ENCODE measurements at regions of chr1 and their contacts with region 1.

Region 1: GRCh38 chr1:231240883-231241735 is at the start of gene GNPAT:
- DNase-seq: peak; percentile 91
- H3K4me3 Mint-ChIP-seq: peak within 1 kb of the TSS; percentile 99
- H3K27ac Mint-ChIP-seq: peak within 1 kb of the TSS; percentile 95
- H3K4me1 Mint-ChIP-seq: peaks cover 51% of the 10 kb centered on the region
- H3K27me3 Mint-ChIP-seq: no peaks in the 10 kb centered on the region
- total RNA-seq, gene GNPAT: 41.7 and 43.1 TPM in 2 replicates

Region 2: DNA sequence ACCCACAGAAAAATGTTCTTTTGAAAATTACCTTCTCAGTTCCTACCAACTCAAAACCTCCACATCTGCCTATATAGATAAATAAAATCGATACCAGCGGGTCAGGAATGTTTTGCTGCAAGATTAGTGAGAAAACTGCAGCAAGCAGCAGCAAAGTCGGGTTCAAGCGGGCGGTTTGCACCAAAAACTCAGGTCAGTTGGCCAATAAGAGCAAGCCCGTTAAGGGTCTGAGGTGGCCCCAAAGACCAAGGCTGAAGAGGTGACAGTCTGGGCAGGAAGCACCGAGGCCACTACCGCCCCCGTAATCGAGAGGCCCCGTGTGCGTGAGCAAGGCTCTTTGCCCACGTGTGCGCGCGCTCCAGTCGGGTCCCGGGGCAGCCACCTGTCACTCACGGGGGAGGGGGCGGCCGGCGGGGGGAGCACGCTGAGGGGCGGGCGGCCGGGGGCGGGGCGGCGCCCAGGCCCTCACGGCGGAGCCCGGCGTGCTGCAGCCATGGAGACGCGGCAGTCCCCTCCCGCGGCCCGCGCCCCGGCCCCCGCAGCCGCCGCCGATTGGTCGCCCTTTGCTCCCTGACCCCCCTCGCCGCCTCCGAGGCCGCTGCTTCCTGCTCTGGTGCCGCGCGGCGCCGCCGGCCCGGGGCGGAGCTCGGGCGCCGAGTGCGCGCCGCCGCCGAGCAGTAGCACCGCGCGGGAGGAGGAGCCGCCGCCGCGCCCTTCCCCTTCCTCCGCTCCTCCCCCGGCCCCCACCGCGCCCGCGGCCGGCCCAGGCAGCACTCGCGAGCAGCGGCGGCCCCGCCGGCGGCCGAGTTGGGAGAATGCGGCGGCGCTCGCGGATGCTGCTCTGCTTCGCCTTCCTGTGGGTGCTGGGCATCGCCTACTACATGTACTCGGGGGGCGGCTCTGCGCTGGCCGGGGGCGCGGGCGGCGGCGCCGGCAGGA is 1174.4 kb before region 1 on chr1 and contains the start of gene GALNT2:
- intact Hi-C with region 1: loop called (anchors 10 kb)
- DNase-seq: peak; percentile 88
- H3K4me3 Mint-ChIP-seq: peak within 1 kb of the TSS; percentile 93
- H3K27ac Mint-ChIP-seq: peak within 1 kb of the TSS; percentile 89
- H3K4me1 Mint-ChIP-seq: peaks cover 48% of the 10 kb centered on the region
- H3K27me3 Mint-ChIP-seq: peaks cover 3% of the 10 kb centered on the region
- total RNA-seq, gene GALNT2: 67.6 and 67.9 TPM in 2 replicates

Region 3: GRCh38 chr1:230978491-230979388 is 262.4 kb before region 1 on chr1 and contains the starts of genes ARV1 and TTC13:
- intact Hi-C with region 1: loop called (anchors 1 kb)
- DNase-seq: peak; percentile 97
- H3K4me3 Mint-ChIP-seq: peak within 1 kb of the TSS; percentile 92
- H3K27ac Mint-ChIP-seq: peak within 1 kb of the TSS; percentile 94
- H3K4me1 Mint-ChIP-seq: peaks cover 33% of the 10 kb centered on the region
- H3K27me3 Mint-ChIP-seq: no peaks in the 10 kb centered on the region
- total RNA-seq, gene ARV1: 14.3 and 14.6 TPM in 2 replicates
- total RNA-seq, gene TTC13: 20.7 and 21.8 TPM in 2 replicates

Region 4: GRCh38 chr1:231272880-231273279 is 31.8 kb after region 1 on chr1:
- intact Hi-C with region 1: loop called (anchors 1 kb)
- DNase-seq: peak; percentile 27
- H3K4me3 Mint-ChIP-seq: peak overlapping the region; percentile 83
- H3K27ac Mint-ChIP-seq: peak overlapping the region; percentile 100
- H3K4me1 Mint-ChIP-seq: peaks cover 39% of the 10 kb centered on the region
- H3K27me3 Mint-ChIP-seq: no peaks in the 10 kb centered on the region

Region 5: GRCh38 chr1:231416901-231417300 is 175.8 kb after region 1 on chr1:
- intact Hi-C with region 1: loop called (anchors 2 kb)
- DNase-seq: no peak
- H3K4me3 Mint-ChIP-seq: peak overlapping the region; percentile 93
- H3K27ac Mint-ChIP-seq: no peak overlapping the region
- H3K4me1 Mint-ChIP-seq: peaks cover 74% of the 10 kb centered on the region
- H3K27me3 Mint-ChIP-seq: no peaks in the 10 kb centered on the region

Region 6: DNA sequence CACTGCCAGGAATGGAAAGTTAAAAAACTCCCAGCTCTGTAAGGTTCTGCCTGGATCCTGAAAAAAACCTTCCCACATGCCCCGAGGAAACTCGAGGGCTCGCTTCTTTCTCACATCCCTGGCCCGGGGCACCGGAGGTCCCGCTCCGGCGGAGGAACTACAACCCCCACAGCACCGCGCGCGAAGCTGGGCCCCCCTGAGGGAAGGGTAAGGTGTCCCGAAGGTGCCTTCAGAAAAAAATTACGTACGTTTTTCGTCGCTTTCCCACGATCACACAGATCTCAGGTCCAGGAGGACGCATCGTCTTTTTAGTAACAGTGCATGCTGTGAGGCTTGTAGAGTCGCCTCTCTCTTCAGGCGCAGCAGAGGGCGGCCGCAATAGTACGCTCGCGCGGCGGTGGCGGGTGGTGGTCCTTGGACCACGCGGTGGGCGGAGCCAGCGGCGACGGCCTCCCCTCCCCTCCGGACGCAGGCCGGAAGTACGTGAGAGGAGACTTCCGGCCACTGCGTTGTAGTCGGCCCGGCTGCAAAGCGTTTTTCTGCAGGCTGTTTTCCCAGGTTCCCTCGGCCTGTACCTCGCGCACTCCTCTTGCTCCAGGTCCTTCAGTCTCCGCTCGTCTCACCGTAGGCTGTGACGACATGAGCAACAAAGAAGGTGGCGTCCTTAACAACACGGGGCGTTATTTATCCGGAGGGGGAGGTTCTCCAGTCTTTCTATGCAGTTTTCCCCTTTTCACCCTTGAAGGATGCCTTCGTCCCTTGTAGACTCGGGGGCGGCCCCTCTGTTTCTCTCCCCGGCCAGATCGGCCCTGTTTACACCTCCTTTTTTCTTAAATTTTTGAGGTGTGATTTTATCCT is 287.3 kb after region 1 on chr1 and contains the start of gene TSNAX:
- intact Hi-C with region 1: loop called (anchors 1 kb)
- DNase-seq: peak; percentile 88
- H3K4me3 Mint-ChIP-seq: peak within 1 kb of the TSS; percentile 93
- H3K27ac Mint-ChIP-seq: peak within 1 kb of the TSS; percentile 98
- H3K4me1 Mint-ChIP-seq: peaks cover 38% of the 10 kb centered on the region
- H3K27me3 Mint-ChIP-seq: no peaks in the 10 kb centered on the region
- total RNA-seq, gene TSNAX: 42.7 and 47.1 TPM in 2 replicates

Region 7: GRCh38 chr1:231626535-231626945 is 385.4 kb after region 1 on chr1 and contains the start of gene DISC1:
- intact Hi-C with region 1: loop called (anchors 2 kb)
- DNase-seq: peak; percentile 68
- H3K4me3 Mint-ChIP-seq: peak within 1 kb of the TSS; percentile 86
- H3K27ac Mint-ChIP-seq: peak within 1 kb of the TSS; percentile 71
- H3K4me1 Mint-ChIP-seq: peaks cover 32% of the 10 kb centered on the region
- H3K27me3 Mint-ChIP-seq: peaks cover 21% of the 10 kb centered on the region
- total RNA-seq, gene DISC1: 3.3 and 3.4 TPM in 2 replicates

Measured in activated T-helper 1 cell treated with anti-CD3 and anti-CD28 coated beads, Interleukin-12 subunit alpha, Interleukin-12 subunit beta, Interleukin-2, Interleukin-4 antibody, amounts not matched to agents 30 ng/mL and 10 ng/mL and 1 ng/mL, durations not matched to agents 14 hours and 24 hours and 36 hours (primary cell).